Ovary (tissue), 10 donors: ENCODE measurements at regions of chr14 and their contacts with region 1.

Region 1: GRCh38 chr14:68655911-68656360 is 136.9 kb downstream of the ZFP36L1 start:
- DNase-seq: peak in 2 of 5 donors; percentile 24 to 28
- H3K4me3 ChIP-seq: no peak overlapping the region
- H3K27ac ChIP-seq: peak overlapping the region; percentile 44 to 80
- H3K4me1 ChIP-seq: peaks cover 60% of the 10 kb centered on the region
- H3K27me3 ChIP-seq: no peaks in the 10 kb centered on the region
- CTCF ChIP-seq: peak in 1 of 3 donors; percentile 21
- EP300 ChIP-seq: no peak
- POLR2A ChIP-seq: no peak

Region 2: GRCh38 chr14:67943947-67944346 is 712.0 kb before region 1 on chr14:
- intact Hi-C with region 1: loop called in 1 of 4 experiments (anchors 5 kb)
- DNase-seq: peak; percentile 62 to 91 (median 80)
- H3K4me3 ChIP-seq: no peak overlapping the region
- H3K27ac ChIP-seq: peak overlapping the region in 1 of 2 donors; percentile 49
- H3K4me1 ChIP-seq: peaks cover 14% of the 10 kb centered on the region
- H3K27me3 ChIP-seq: no peaks in the 10 kb centered on the region
- CTCF ChIP-seq: peak; percentile 69 to 94 (median 94)
- EP300 ChIP-seq: no peak
- POLR2A ChIP-seq: no peak

Region 3: GRCh38 chr14:68392393-68393141 is 263.4 kb before region 1 on chr14:
- intact Hi-C with region 1: loop called in 1 of 4 experiments (anchors 10 kb)
- DNase-seq: peak in 4 of 5 donors; percentile 65 to 75 (median 68)
- H3K4me3 ChIP-seq: no peak overlapping the region
- H3K27ac ChIP-seq: peak overlapping the region; percentile 17 to 76
- H3K4me1 ChIP-seq: peaks cover 43% of the 10 kb centered on the region
- H3K27me3 ChIP-seq: no peaks in the 10 kb centered on the region
- CTCF ChIP-seq: no peak
- EP300 ChIP-seq: no peak
- POLR2A ChIP-seq: no peak

Region 4: GRCh38 chr14:68408680-68409079 is 247.3 kb before region 1 on chr14:
- intact Hi-C with region 1: loop called in 1 of 4 experiments (anchors 10 kb)
- DNase-seq: no peak
- H3K4me3 ChIP-seq: no peak overlapping the region
- H3K27ac ChIP-seq: no peak overlapping the region
- H3K4me1 ChIP-seq: peaks cover 13% of the 10 kb centered on the region
- H3K27me3 ChIP-seq: no peaks in the 10 kb centered on the region
- CTCF ChIP-seq: no peak
- EP300 ChIP-seq: no peak
- POLR2A ChIP-seq: no peak

Region 5: DNA sequence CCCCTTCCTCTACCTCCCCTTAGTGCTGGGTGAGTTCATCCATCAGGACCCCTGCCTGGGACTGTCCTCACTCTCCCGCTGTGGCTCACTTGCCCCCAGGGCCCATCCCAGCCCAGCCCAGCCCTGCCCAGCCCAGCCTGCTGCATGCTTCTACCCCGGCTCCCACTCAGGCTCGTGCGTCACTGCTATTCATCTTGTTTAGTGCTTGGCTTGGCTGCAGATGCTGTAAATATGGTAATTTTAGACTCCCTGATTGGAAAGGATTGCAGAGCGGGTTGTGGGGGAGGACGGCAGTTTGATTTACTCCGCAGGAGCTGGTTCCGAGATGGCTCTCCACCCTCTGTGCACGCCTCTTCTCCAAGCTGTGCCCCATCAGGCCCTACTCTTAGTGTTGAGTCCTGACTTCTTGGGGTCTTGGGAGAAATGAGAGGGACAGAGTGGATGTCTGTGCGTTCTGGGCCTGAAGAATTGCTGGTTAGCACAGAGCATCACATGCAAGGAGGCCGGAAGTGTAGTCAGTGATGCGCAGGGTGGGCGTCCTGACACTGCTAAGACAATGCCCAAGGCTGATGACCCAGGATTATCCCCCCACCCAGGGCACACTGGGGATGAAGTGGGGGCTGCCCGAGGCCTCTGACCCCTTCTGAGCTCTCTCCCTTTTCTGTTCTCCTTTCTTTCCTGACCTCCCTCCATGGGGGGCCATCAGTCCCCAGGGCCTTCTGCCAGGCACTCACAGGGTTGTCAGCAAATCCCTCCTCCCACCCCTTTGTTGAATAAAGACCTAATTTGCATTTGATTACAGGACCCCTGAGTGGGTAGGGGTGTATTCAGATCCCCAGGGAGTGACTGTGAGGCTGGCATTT is 107.5 kb before region 1 on chr14:
- intact Hi-C with region 1: loop called in 2 of 4 experiments (anchors 5 to 10 kb)
- DNase-seq: peak; percentile 89 to 96 (median 93)
- H3K4me3 ChIP-seq: no peak overlapping the region
- H3K27ac ChIP-seq: peak overlapping the region; percentile 78 to 92
- H3K4me1 ChIP-seq: peaks cover 40% of the 10 kb centered on the region
- H3K27me3 ChIP-seq: no peaks in the 10 kb centered on the region
- CTCF ChIP-seq: no peak
- EP300 ChIP-seq: peak; percentile 85
- POLR2A ChIP-seq: peak; percentile 49

Region 6: GRCh38 chr14:68563246-68564131 is 92.4 kb before region 1 on chr14:
- intact Hi-C with region 1: loop called in 2 of 4 experiments (anchors 10 kb)
- DNase-seq: peak; percentile 73 to 80 (median 77)
- H3K4me3 ChIP-seq: no peak overlapping the region
- H3K27ac ChIP-seq: peak overlapping the region; percentile 50 to 92
- H3K4me1 ChIP-seq: peaks cover 33% of the 10 kb centered on the region
- H3K27me3 ChIP-seq: no peaks in the 10 kb centered on the region
- CTCF ChIP-seq: no peak
- EP300 ChIP-seq: peak; percentile 38
- POLR2A ChIP-seq: no peak

Region 7: GRCh38 chr14:68593806-68594561 is 62.0 kb before region 1 on chr14:
- intact Hi-C with region 1: loop called in 1 of 4 experiments (anchors 5 kb)
- DNase-seq: no peak
- H3K4me3 ChIP-seq: no peak overlapping the region
- H3K27ac ChIP-seq: no peak overlapping the region
- H3K4me1 ChIP-seq: peaks cover 20% of the 10 kb centered on the region
- H3K27me3 ChIP-seq: no peaks in the 10 kb centered on the region
- CTCF ChIP-seq: no peak
- EP300 ChIP-seq: no peak
- POLR2A ChIP-seq: no peak

Region 8: DNA sequence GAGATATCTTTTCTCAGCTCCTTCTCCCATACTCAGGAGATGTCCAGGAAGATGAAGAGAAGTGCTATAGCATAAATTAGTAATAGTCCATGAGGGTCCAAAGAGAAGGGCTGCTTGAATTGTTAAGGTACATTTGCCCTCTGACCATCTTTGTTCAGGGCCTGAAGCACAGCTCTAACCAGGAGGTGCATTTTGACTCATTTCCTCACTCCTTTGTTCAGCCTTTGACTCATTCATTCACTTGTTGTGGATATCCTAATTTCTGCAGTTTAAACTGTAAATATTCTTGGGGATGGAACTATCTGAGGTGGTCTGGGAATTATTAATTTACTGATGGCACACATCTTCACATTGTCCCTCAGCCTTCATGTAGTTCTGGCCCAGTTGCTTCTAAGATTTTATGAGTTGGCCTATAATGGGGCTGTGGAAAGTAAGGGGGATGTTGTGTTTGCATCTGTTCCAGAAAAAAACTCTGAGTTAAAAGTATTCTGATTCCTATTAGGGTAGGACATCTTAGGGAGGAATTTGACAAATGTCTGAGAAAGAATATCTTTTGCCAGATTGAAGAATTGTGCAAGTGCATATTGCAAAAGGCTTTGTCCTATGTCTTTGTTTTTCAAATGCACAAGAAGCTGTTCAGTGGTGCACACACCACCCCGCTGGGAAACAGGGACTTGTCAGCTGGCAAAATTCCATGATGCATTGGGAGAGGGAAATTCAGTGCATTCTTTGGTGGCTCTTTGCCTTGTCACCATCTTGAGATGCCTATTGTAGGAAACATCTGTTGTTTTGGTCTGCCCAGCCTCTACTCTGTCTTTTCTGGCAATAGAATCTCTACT is 1245.4 kb after region 1 on chr14:
- intact Hi-C with region 1: no loop called
- DNase-seq: no peak
- H3K4me3 ChIP-seq: no peak overlapping the region
- H3K27ac ChIP-seq: no peak overlapping the region
- H3K4me1 ChIP-seq: no peaks in the 10 kb centered on the region
- H3K27me3 ChIP-seq: no peaks in the 10 kb centered on the region
- CTCF ChIP-seq: no peak
- EP300 ChIP-seq: no peak
- POLR2A ChIP-seq: no peak